B cell (primary cell): ENCODE measurements at regions of chr11 and their contacts with region 1.

Region 1: DNA sequence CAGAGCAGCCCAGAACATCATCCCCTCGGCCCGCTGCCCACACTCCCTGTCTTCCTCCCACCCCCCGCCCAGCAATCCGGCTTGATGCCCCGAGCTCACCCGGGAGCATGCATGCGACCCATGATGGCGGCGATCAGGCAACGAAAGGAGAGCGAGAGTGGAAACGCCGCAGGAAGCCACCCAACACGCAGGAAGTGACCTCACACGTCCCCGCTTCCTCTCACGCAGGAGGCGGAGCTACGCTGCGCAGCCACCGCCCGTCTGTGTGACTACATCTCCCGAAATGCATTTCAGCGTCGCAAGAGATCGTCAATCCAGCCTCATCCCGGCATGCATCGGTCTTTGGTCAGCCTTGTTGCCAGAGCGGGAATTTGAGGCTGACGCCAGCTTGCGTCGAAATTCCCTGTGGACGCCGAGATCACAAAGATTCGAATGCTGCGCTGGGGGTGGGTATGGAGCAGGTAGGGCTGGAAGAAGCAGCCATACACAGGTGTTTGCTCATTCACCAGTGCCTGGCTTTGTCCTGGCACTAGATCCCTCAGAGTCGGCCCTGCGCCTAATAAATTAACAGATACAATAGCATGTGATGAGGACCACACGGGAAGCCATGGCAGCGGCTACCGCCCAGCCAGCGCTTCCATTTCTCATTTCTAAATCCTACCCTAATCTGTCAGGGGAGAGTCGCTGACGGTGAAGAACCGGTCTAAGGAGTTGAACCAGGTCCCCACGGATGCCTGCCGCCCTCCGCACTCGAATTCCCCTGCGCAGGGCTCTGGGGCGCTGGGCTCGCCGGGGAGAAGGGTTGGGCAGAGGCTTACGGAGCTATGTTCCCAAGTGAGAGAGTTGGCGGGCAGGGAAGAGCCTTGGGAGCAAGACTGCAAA is at the start of gene RPS13:
- DNase-seq: peak; percentile 97
- ATAC-seq: peak; percentile 96
- H3K4me3 ChIP-seq: peak within 1 kb of the TSS; percentile 60 to 97 (median 89)
- H3K4me3 Mint-ChIP-seq: peak within 1 kb of the TSS; percentile 89
- H3K27ac ChIP-seq: peak within 1 kb of the TSS; percentile 94
- H3K27ac Mint-ChIP-seq: peak within 1 kb of the TSS; percentile 92
- H3K4me1 ChIP-seq: peaks cover 23 to 26% of the 10 kb centered on the region in 2 donors
- H3K4me1 Mint-ChIP-seq: peaks cover 39% of the 10 kb centered on the region
- H3K27me3 ChIP-seq: no peaks in the 10 kb centered on the region
- H3K27me3 Mint-ChIP-seq: no peaks in the 10 kb centered on the region
- CTCF ChIP-seq: no peak
- total RNA-seq, gene RPS13: 1,295 and 1,411 TPM in 2 replicates

Region 2: DNA sequence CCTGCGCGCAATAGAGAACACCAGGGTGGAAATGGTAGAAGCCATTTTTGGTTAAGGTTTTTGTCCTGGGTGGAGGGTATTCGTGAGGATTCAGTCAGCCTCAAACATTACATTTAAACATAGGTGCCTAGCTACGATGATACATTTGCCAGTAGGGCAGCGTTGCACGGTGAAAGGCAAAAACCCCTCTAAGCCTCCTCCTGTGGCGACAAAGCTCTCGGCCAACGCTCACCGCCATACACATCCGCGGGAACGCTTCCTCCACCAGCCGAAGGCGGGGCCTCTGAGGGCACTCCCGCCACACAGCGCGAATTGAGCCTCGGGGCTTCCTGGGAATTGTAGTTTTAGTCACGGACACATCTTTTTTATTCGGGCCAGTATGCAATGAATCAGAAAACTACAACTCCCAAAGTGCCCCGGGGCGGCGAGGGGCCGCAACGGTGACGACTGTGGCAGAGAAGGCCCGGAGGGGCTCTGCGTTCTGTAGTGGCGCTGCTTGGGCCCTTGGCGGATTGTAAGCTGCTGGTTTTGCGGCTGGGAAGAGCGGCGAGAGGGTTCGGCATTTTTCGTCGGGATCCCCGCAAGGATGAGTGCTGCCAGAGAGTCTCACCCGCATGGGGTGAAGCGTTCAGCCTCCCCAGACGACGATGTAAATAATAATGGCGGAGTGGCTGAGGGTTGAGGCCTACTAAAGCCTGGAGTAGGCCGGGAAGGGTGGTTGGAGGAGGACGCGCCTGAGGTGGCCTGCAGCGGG is 339.4 kb before region 1 on chr11 and contains the start of gene C11orf58:
- CTCF ChIA-PET with region 1: no interaction called
- POLR2A ChIA-PET with region 1: interaction called, 14 read pairs
- intact Hi-C with region 1: loop called (anchors 1 kb)
- DNase-seq: peak; percentile 98
- ATAC-seq: peak; percentile 97
- H3K4me3 ChIP-seq: peak within 1 kb of the TSS; percentile 86 to 97 (median 95)
- H3K4me3 Mint-ChIP-seq: peak within 1 kb of the TSS; percentile 73
- H3K27ac ChIP-seq: peak within 1 kb of the TSS; percentile 98 to 99
- H3K27ac Mint-ChIP-seq: peak within 1 kb of the TSS; percentile 66
- H3K4me1 ChIP-seq: peaks cover 25 to 28% of the 10 kb centered on the region in 2 donors
- H3K4me1 Mint-ChIP-seq: peaks cover 20% of the 10 kb centered on the region
- H3K27me3 ChIP-seq: no peaks in the 10 kb centered on the region
- H3K27me3 Mint-ChIP-seq: no peaks in the 10 kb centered on the region
- CTCF ChIP-seq: no peak
- total RNA-seq, gene C11orf58: 125 and 129 TPM in 2 replicates

Region 3: DNA sequence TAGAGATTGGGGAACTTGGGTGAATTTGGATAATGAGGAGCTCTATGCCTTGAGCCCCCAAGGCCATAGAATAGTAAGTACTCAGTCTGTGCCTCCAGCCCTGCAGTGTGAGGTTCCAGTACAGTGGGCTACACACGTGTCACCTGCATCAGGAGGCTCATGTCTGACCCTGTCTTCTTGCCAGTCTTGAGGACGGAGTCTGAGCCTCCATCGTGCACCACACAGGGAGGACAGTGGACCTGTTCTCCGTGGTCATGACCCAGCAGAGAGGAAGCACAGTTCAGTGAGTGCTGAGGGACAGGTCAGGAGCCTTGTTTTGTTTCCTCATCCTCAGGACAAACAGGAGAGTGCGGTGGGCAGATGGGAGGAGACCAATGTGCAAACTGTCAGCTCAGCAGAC is 31.1 kb before region 1 on chr11:
- CTCF ChIA-PET with region 1: no interaction called
- POLR2A ChIA-PET with region 1: no interaction called
- intact Hi-C with region 1: no loop called
- DNase-seq: no peak
- ATAC-seq: no peak
- H3K4me3 ChIP-seq: no peak overlapping the region
- H3K4me3 Mint-ChIP-seq: no peak overlapping the region
- H3K27ac ChIP-seq: no peak overlapping the region
- H3K27ac Mint-ChIP-seq: no peak overlapping the region
- H3K4me1 ChIP-seq: no peaks in the 10 kb centered on the region
- H3K4me1 Mint-ChIP-seq: no peaks in the 10 kb centered on the region
- H3K27me3 ChIP-seq: peaks cover 0 to 3% (median 0%) of the 10 kb centered on the region in 4 experiments
- H3K27me3 Mint-ChIP-seq: no peaks in the 10 kb centered on the region
- CTCF ChIP-seq: no peak

Region 4: DNA sequence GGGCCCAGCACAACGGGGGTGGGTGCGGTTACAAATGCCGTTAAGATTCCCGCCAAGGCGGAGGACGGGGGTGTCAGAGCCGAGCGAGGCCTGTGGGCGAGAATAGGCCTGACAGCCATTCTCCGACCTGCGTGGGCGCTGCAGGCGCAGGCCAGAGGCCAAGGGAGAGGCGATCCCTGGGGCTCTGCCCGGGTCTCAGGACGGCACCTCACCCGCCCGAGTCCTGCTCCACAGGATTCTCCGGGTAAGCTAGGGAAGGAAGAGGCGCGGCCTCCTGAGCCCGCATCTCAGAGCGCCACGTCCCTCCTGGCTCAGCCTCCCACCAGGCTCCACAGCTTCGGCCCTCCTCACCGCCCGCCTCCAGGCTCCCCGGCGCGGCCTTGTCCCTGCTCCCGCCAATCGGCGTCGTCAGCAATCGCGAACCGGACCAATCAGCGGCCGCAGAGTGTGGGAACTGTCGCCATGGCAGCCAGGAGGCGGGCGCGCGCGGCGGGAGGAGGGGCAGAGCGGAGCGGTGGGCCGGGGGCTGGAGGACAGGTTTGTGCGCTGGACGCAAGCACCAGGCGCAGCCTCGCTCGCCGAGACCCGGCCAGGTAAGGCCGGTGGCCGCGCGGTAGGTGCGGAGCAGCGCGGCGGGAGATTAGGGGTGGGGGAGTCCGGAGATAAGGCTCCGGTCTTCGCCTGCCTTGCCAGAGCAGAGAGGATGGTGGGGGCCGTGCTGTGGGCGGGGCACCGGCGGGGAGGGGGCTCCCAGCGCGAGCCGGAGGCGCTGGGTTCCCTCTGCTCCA is 198.7 kb after region 1 on chr11 and contains the start of gene NUCB2:
- CTCF ChIA-PET with region 1: no interaction called
- POLR2A ChIA-PET with region 1: no interaction called
- intact Hi-C with region 1: loop called (anchors 1 kb)
- DNase-seq: peak; percentile 95
- ATAC-seq: peak; percentile 97
- H3K4me3 ChIP-seq: peak within 1 kb of the TSS; percentile 50 to 89 (median 78)
- H3K4me3 Mint-ChIP-seq: peak within 1 kb of the TSS; percentile 95
- H3K27ac ChIP-seq: peak within 1 kb of the TSS; percentile 56 to 64
- H3K27ac Mint-ChIP-seq: peak within 1 kb of the TSS; percentile 89
- H3K4me1 ChIP-seq: peaks cover 8 to 14% of the 10 kb centered on the region in 2 donors
- H3K4me1 Mint-ChIP-seq: peaks cover 20% of the 10 kb centered on the region
- H3K27me3 ChIP-seq: no peaks in the 10 kb centered on the region
- H3K27me3 Mint-ChIP-seq: no peaks in the 10 kb centered on the region
- CTCF ChIP-seq: no peak
- total RNA-seq, gene NUCB2: 6.8 and 10.5 TPM in 2 replicates

Region 5: DNA sequence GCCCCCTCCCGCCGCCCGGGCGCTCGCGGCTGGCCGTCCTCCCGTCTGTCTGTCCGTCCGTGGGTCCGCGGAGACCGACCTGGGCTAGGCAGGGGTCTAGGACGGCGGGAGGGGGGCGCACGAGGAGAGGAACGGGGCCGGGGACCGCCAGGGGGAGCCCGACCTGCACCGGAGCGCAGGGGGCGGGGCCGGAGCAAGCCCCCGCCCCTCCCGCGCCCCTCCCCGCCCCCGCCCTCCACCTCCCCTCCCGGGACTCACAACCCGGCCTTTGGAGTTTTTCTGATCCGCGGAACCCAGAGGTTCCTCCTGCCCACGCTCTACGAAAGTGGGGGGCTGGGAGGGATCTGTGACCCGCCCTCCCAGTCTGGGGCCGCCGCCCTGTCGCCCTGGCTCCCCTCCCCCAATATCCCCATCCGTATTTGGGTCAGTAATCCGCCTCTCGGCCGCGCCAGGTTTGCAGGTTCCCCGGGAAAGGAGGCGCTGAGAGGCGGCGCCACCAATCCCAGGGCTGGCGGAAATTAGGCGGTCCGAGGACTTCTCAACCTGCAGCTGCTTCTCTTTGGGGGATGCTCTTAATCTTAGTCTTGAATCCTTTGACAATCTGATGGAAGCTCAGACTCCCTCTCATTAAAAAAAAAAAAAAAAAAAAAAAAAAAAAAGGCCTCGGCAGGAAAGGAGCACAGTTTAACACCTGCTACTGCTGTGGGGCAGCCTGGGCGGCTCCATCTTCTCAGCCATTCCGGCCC is 311.6 kb after region 1 on chr11:
- CTCF ChIA-PET with region 1: no interaction called
- POLR2A ChIA-PET with region 1: interaction called, 6 read pairs
- intact Hi-C with region 1: loop called (anchors 5 kb)
- DNase-seq: peak; percentile 88
- ATAC-seq: peak; percentile 94
- H3K4me3 ChIP-seq: peak overlapping the region; percentile 16 to 90 (median 63)
- H3K4me3 Mint-ChIP-seq: peak overlapping the region; percentile 85
- H3K27ac ChIP-seq: peak overlapping the region in 1 of 2 donors; percentile 29
- H3K27ac Mint-ChIP-seq: peak overlapping the region; percentile 59
- H3K4me1 ChIP-seq: peaks cover 4 to 33% of the 10 kb centered on the region in 2 donors
- H3K4me1 Mint-ChIP-seq: peaks cover 16% of the 10 kb centered on the region
- H3K27me3 ChIP-seq: peaks cover 0 to 2% (median 0%) of the 10 kb centered on the region in 4 experiments
- H3K27me3 Mint-ChIP-seq: peaks cover 5% of the 10 kb centered on the region
- CTCF ChIP-seq: peak; percentile 82

Region 6: DNA sequence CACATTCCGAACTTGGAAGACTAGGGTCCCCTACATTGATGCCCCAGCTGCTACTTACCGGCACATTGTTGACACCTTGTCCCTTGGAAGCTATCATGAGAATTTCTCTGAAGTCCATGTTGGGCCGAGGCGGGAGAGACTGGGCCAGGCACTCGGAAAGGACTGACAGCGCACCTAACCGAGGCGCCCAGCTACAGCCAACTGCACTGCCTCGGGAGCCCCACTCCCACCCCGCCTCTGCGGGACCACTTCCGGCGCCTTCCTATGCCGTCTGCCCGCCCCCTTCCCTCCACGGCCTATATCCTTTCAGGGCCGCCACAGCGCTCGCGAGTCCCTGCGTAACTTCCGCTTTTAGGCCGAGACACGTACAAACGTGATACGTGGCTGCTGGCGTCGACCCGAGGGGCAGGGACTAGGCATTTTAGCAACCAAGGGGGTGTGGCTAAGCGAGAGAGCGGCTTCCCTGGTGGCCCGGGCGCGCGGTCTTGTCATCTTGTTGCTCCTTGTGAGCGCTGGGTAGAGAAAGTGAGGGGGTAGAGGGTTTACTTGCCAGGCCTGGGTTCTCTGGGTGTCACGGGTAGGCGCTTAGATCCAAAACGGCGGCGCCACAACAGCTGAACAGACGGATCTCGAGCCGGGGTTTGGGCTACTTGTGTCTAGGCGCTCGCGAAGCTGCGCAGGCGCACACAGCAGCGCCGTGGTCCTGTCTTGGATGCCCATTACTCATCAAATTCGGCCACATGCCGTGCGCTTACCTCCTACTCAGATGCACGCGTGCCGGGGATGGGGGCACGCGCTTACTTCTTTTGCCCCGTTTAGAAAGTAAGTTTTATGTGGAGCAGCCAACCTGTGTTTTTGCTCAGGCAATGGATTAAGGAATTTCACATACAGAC is 1556.6 kb after region 1 on chr11 and contains the start of gene SPTY2D1:
- CTCF ChIA-PET with region 1: no interaction called
- POLR2A ChIA-PET with region 1: no interaction called
- intact Hi-C with region 1: loop called (anchors 5 kb)
- DNase-seq: peak; percentile 98
- ATAC-seq: peak; percentile 95
- H3K4me3 ChIP-seq: peak within 1 kb of the TSS; percentile 64 to 95 (median 91)
- H3K4me3 Mint-ChIP-seq: peak within 1 kb of the TSS; percentile 99
- H3K27ac ChIP-seq: peak within 1 kb of the TSS; percentile 75 to 97
- H3K27ac Mint-ChIP-seq: peak within 1 kb of the TSS; percentile 98
- H3K4me1 ChIP-seq: peaks cover 14 to 16% of the 10 kb centered on the region in 2 donors
- H3K4me1 Mint-ChIP-seq: peaks cover 23% of the 10 kb centered on the region
- H3K27me3 ChIP-seq: no peaks in the 10 kb centered on the region
- H3K27me3 Mint-ChIP-seq: peaks cover 8% of the 10 kb centered on the region
- CTCF ChIP-seq: no peak
- total RNA-seq, gene SPTY2D1: 16.5 and 17.8 TPM in 2 replicates